ENCODE measurements at regions of chr10 and their contacts with region 1.

Region 1: DNA sequence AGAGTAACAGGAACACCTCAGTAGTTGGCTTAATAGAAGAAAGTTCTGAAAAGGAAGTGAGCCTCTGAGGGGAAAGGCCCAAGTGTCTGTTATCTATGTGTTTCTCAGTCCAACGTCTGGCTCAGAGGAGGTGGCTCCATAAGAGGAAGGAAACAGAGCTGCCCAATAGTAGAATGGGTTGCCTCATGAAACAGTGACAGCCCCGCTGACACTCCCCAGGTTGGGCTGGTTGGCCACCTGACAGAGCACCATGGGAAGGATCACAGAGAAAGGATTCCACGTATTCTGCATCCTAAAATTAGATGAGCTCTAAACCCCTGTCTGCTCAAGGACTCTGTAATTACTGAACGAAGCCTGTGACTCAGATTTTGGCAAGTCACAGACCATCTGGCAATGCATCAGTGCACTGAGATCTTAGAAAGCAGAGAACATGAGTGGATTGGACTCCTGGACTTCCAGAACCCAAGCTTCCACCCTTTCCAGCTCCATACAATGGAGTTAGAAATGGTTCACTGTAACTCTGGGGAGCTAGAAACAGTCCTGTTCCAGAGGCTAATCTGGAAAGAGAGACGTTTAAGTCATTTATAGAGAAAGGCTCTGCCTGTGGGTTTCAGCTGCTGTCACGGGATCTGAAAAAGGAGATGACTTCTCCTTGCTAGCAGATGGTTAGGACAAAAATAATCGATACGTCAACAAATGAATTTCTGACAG is 2.9 kb downstream of the PKD2L1 start:
- DNase-seq: peak; percentile 50
- ATAC-seq: peak; percentile 100
- H3K4me3 Mint-ChIP-seq: peak overlapping the region; percentile 32
- H3K27ac Mint-ChIP-seq: peak overlapping the region; percentile 86
- H3K4me1 Mint-ChIP-seq: peaks cover 26% of the 10 kb centered on the region
- H3K27me3 Mint-ChIP-seq: peaks cover 14% of the 10 kb centered on the region
- CTCF ChIP-seq: no peak

Region 2: GRCh38 chr10:99742701-99743100 is 584.5 kb before region 1 on chr10:
- CTCF ChIA-PET with region 1: no interaction called
- POLR2A ChIA-PET with region 1: no interaction called
- intact Hi-C with region 1: no loop called
- DNase-seq: no peak
- ATAC-seq: no peak
- H3K4me3 Mint-ChIP-seq: no peak overlapping the region
- H3K27ac Mint-ChIP-seq: no peak overlapping the region
- H3K4me1 Mint-ChIP-seq: no peaks in the 10 kb centered on the region
- H3K27me3 Mint-ChIP-seq: no peaks in the 10 kb centered on the region
- CTCF ChIP-seq: no peak

Region 3: DNA sequence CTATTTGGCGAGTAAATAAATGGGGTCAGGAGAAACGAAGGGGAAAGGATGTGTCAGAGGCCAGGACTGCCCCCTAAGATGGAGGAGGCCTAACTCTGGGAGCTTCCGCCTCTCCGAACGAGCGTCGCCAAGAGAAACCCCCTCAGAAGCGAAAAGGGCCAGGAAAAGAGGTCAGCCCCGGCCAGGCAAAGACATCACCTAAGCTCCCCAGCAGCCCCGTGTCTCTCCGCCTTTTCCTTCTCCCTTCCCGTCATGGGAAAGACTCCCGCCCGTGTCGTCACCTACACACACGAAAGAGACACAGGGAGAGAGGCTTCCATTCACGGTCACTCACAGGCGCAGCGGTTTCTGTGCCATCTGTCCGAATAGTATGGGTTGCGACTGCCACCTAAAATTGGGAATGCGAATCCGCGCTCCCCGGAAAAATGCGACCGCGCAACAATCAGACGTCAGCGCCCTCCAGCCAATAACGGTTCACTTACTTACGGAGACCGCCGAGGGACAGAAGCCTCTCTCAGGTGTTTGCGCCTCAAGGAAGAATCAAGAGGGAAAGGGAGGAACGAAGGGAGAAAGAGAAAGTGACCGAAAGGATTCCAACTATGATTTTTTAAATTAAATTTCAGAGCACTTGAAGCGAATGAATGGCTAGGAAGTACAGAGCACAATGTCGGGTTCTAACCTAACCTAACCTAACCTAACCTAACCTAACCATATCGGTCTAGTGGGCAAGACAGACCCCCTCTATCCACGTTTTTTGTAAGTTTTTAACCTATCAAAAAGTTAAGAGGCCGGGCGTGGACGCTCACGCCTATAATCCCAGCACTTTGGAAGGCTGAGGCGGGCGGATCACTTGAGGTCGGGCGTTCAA is 59.7 kb before region 1 on chr10 and contains the start of gene CWF19L1:
- CTCF ChIA-PET with region 1: no interaction called
- POLR2A ChIA-PET with region 1: interaction called, 8 read pairs
- intact Hi-C with region 1: loop called (anchors 1 kb)
- DNase-seq: peak; percentile 62
- ATAC-seq: peak; percentile 80
- H3K4me3 Mint-ChIP-seq: peak within 1 kb of the TSS; percentile 99
- H3K27ac Mint-ChIP-seq: peak within 1 kb of the TSS; percentile 97
- H3K4me1 Mint-ChIP-seq: peaks cover 33% of the 10 kb centered on the region
- H3K27me3 Mint-ChIP-seq: no peaks in the 10 kb centered on the region
- CTCF ChIP-seq: no peak
- total RNA-seq, gene CWF19L1: 41.8 and 53.3 TPM in 2 replicates

Region 4: GRCh38 chr10:100286051-100287033 is 40.8 kb before region 1 on chr10 and contains the start of gene BLOC1S2:
- CTCF ChIA-PET with region 1: no interaction called
- POLR2A ChIA-PET with region 1: interaction called, 5 read pairs
- intact Hi-C with region 1: loop called (anchors 1 kb)
- DNase-seq: peak; percentile 95
- ATAC-seq: peak; percentile 86
- H3K4me3 Mint-ChIP-seq: peak within 1 kb of the TSS; percentile 99
- H3K27ac Mint-ChIP-seq: peak within 1 kb of the TSS; percentile 97
- H3K4me1 Mint-ChIP-seq: no peaks in the 10 kb centered on the region
- H3K27me3 Mint-ChIP-seq: no peaks in the 10 kb centered on the region
- CTCF ChIP-seq: no peak
- total RNA-seq, gene BLOC1S2: 47.7 and 52.3 TPM in 2 replicates

Region 5: DNA sequence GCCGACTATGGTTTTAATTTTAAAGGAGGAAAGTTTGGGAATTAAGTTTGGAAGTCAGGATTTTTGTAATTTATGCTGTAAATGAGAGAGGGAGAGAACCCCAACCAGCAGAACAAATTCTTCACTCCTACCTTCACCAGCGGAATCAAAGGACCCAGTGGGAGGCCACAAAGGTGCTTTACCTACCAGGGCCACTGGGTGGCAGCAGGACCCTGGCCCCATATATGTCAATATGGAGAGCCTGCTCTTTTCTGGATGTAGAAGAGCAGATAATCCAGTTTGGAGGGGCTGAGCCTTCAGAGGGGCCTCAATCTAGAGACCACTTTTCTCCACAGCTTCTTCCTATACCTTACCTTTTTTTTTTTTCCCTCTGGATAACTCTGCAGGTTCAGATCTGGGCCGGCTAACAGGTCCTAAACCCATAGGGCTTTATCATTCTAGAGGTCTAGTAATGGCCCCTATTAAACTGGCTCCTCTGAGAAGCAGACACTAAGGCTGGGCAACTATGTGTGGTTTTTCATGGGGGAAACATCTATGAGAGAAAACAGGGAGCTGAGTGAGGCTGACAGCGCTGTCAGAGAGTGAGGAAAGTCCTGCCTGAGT is 11.4 kb after region 1 on chr10:
- CTCF ChIA-PET with region 1: interaction called, 7 read pairs
- POLR2A ChIA-PET with region 1: interaction called, 7 read pairs
- intact Hi-C with region 1: loop called (anchors 1 kb)
- DNase-seq: peak; percentile 64
- ATAC-seq: peak; percentile 87
- H3K4me3 Mint-ChIP-seq: peak overlapping the region; percentile 24
- H3K27ac Mint-ChIP-seq: peak overlapping the region; percentile 19
- H3K4me1 Mint-ChIP-seq: peaks cover 25% of the 10 kb centered on the region
- H3K27me3 Mint-ChIP-seq: peaks cover 3% of the 10 kb centered on the region
- CTCF ChIP-seq: no peak

Region 6: DNA sequence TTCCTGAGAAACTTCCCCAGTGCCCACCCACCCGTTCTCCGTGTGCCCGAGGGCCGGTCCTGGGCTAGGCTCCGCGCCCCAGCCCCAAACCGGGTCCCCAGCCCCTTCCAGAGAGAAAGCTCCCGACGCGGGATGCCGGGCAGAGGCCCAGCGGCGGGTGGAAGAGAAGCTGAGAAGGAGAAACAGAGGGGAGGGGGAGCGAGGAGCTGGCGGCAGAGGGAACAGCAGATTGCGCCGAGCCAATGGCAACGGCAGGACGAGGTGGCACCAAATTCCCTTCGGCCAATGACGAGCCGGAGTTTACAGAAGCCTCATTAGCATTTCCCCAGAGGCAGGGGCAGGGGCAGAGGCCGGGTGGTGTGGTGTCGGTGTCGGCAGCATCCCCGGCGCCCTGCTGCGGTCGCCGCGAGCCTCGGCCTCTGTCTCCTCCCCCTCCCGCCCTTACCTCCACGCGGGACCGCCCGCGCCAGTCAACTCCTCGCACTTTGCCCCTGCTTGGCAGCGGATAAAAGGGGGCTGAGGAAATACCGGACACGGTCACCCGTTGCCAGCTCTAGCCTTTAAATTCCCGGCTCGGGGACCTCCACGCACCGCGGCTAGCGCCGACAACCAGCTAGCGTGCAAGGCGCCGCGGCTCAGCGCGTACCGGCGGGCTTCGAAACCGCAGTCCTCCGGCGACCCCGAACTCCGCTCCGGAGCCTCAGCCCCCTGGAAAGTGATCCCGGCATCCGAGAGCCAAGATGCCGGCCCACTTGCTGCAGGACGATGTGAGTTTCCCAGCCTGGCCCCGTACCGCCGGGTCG is 19.8 kb after region 1 on chr10 and contains the start of gene SCD:
- CTCF ChIA-PET with region 1: no interaction called
- POLR2A ChIA-PET with region 1: interaction called, 22 read pairs
- intact Hi-C with region 1: loop called (anchors 1 kb)
- DNase-seq: peak; percentile 69
- ATAC-seq: peak; percentile 95
- H3K4me3 Mint-ChIP-seq: peak within 1 kb of the TSS; percentile 89
- H3K27ac Mint-ChIP-seq: peak within 1 kb of the TSS; percentile 61
- H3K4me1 Mint-ChIP-seq: peaks cover 22% of the 10 kb centered on the region
- H3K27me3 Mint-ChIP-seq: peaks cover 3% of the 10 kb centered on the region
- CTCF ChIP-seq: no peak
- total RNA-seq, gene SCD: 24.9 and 26.0 TPM in 2 replicates

Region 7: DNA sequence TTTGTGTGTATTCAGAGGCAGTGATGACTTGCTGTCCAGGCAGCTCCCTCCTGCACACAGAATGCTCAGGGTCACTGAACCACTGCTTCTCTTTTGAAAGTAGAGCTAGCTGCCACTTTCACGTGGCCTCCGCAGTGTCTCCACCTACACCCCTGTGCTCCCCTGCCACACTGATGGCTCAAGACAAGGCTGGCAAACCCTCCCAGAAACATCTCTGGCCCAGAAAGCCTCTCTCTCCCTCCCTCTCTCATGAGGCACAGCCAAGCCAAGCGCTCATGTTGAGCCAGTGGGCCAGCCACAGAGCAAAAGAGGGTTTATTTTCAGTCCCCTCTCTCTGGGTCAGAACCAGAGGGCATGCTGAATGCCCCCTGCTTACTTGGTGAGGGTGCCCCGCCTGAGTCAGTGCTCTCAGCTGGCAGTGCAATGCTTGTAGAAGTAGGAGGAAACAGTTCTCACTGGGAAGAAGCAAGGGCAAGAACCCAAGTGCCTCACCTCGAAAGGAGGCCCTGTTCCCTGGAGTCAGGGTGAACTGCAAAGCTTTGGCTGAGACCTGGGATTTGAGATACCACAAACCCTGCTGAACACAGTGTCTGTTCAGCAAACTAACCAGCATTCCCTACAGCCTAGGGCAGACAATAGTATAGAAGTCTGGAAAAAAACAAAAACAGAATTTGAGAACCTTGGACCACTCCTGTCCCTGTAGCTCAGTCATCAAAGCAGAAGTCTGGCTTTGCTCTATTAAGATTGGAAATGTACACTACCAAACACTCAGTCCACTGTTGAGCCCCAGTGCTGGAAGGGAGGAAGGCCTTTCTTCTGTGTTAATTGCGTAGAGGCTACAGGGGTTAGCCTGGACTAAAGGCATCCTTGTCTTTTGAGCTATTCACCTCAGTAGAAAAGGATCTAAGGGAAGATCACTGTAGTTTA is 35.7 kb after region 1 on chr10:
- CTCF ChIA-PET with region 1: no interaction called
- POLR2A ChIA-PET with region 1: no interaction called
- intact Hi-C with region 1: no loop called
- DNase-seq: no peak
- ATAC-seq: no peak
- H3K4me3 Mint-ChIP-seq: no peak overlapping the region
- H3K27ac Mint-ChIP-seq: no peak overlapping the region
- H3K4me1 Mint-ChIP-seq: peaks cover 5% of the 10 kb centered on the region
- H3K27me3 Mint-ChIP-seq: peaks cover 8% of the 10 kb centered on the region
- CTCF ChIP-seq: no peak

Region 8: GRCh38 chr10:100373298-100374136 is 46.4 kb after region 1 on chr10:
- CTCF ChIA-PET with region 1: interaction called, 4 read pairs
- POLR2A ChIA-PET with region 1: interaction called, 10 read pairs
- intact Hi-C with region 1: loop called (anchors 2 kb)
- DNase-seq: peak; percentile 61
- ATAC-seq: peak; percentile 98
- H3K4me3 Mint-ChIP-seq: no peak overlapping the region
- H3K27ac Mint-ChIP-seq: no peak overlapping the region
- H3K4me1 Mint-ChIP-seq: peaks cover 33% of the 10 kb centered on the region
- H3K27me3 Mint-ChIP-seq: no peaks in the 10 kb centered on the region
- CTCF ChIP-seq: no peak

Region 9: GRCh38 chr10:100529475-100530298 is 202.5 kb after region 1 on chr10 and contains the start of gene NDUFB8:
- CTCF ChIA-PET with region 1: no interaction called
- POLR2A ChIA-PET with region 1: no interaction called
- intact Hi-C with region 1: loop called (anchors 1 kb)
- DNase-seq: peak; percentile 77
- ATAC-seq: peak; percentile 85
- H3K4me3 Mint-ChIP-seq: peak within 1 kb of the TSS; percentile 100
- H3K27ac Mint-ChIP-seq: peak within 1 kb of the TSS; percentile 96
- H3K4me1 Mint-ChIP-seq: peaks cover 26% of the 10 kb centered on the region
- H3K27me3 Mint-ChIP-seq: no peaks in the 10 kb centered on the region
- CTCF ChIP-seq: no peak
- total RNA-seq, gene NDUFB8: 191 and 205 TPM in 2 replicates

Measured in activated B cell treated with CpG ODN at 0.5 μM for 24 hours (primary cell).